Caco-2 (cell line): ENCODE measurements at regions of chr14 and their contacts with region 1.

Region 1: DNA sequence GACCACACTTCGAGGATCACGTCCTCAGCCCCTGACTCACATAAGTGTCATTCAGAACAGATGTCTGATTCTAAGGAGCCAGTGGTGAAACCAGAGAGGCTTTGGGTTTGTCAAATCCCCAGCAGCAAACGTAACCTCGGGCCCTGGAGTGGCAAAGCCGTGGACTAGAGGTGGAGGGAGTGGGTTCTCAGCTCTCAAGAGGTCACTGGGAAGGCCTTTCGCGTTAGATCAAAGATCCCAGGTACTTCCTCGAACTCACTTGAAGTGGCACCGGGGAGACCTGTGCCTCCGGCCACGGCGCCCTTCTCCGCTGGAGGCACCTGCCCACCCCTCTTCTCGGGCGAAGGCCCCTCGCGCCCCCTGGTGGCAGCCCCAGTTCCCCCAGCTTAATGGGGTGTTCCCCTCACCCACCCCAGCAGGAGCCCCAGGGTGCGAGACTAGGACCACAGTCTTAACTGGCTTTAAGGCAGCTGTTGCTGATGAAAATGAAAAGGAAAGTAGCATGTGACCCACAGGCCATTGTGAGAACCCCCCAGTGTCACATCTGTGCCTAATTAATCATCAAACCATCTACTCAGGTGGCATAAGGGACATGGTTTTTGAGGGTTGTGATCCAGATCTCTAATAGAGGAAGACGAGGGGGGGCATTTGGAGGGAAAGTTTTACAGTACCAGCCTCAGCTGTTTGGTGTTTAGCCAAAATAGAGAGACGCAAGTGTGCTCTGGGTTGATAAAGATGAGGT is 672 bp upstream of the ESR2 start:
- DNase-seq: peak; percentile 80 to 91
- H3K4me3 ChIP-seq: peak overlapping the region; percentile 29
- H3K4me3 Mint-ChIP-seq: peak overlapping the region; percentile 74
- H3K27ac Mint-ChIP-seq: no peak overlapping the region
- H3K4me1 ChIP-seq: peaks cover 7% of the 10 kb centered on the region; the same call in 1 of the 2 replicates
- H3K4me1 Mint-ChIP-seq: no peaks in the 10 kb centered on the region
- H3K27me3 ChIP-seq: no peaks in the 10 kb centered on the region
- H3K27me3 Mint-ChIP-seq: peaks cover 3% of the 10 kb centered on the region
- CTCF ChIP-seq: peak; percentile 94

Region 2: DNA sequence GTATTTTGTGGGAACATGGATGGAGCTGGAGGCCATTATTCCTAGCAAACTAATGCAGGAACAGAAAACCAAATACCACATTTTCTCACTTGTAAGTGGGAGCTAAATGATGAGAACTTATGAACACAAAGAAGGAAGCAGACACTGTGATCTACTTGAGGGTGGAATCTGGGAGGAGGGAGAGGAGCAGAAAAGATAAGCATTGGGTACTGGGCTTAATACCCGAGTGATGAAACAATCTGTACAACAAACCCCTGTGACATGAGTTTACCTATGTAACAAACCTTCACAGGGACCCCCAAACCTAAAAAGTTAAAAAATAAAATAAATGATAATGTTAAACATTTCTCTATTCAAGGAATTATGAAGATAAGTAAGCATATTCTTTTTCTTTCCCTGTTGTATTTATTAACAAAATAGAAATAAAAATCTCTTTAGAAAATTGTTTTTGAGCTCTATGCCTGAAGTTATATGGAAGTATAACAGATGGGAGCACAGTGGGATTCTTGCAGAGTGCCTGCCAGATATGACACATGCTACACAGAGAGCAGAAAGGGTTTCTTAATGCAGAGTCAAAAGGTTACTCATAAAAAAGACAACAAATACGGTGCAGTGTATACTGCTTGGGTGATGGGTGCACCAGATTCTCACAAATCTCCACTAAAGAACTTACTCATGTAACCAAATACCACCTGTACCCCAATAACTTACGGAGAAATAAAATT is 494.0 kb before region 1 on chr14:
- CTCF ChIA-PET with region 1: no interaction called
- POLR2A ChIA-PET with region 1: no interaction called
- intact Hi-C with region 1: loop called (anchors 2 kb)
- DNase-seq: no peak
- H3K4me3 ChIP-seq: no peak overlapping the region
- H3K4me3 Mint-ChIP-seq: no peak overlapping the region
- H3K27ac Mint-ChIP-seq: no peak overlapping the region
- H3K4me1 ChIP-seq: no peaks in the 10 kb centered on the region
- H3K4me1 Mint-ChIP-seq: no peaks in the 10 kb centered on the region
- H3K27me3 ChIP-seq: no peaks in the 10 kb centered on the region
- H3K27me3 Mint-ChIP-seq: no peaks in the 10 kb centered on the region
- CTCF ChIP-seq: no peak

Region 3: DNA sequence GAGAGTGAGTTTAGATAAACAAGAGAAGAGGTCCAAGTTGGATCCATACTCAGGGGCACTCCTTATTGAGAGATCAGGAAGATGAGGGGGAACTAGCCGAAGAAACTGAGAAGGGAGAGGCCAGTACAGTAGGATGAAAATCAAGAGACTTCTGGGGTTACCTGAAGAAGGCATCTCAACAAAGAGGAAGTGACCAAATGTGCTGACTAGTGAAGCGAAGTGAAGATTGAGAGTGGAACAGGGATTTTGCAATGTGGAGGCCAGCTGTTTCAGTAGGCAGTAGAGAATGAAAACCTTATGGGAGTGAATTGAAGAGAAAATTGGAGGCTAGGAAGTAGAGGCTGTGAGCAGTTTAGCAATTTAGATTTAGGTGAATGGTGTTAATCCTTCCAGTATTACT is 289.0 kb before region 1 on chr14:
- CTCF ChIA-PET with region 1: interaction called, 13 read pairs
- POLR2A ChIA-PET with region 1: no interaction called
- intact Hi-C with region 1: loop called (anchors 1 kb)
- DNase-seq: no peak
- H3K4me3 ChIP-seq: no peak overlapping the region
- H3K4me3 Mint-ChIP-seq: no peak overlapping the region
- H3K27ac Mint-ChIP-seq: no peak overlapping the region
- H3K4me1 ChIP-seq: no peaks in the 10 kb centered on the region
- H3K4me1 Mint-ChIP-seq: no peaks in the 10 kb centered on the region
- H3K27me3 ChIP-seq: no peaks in the 10 kb centered on the region
- H3K27me3 Mint-ChIP-seq: no peaks in the 10 kb centered on the region
- CTCF ChIP-seq: no peak

Region 4: GRCh38 chr14:64060648-64061096 is 234.2 kb before region 1 on chr14:
- CTCF ChIA-PET with region 1: no interaction called
- POLR2A ChIA-PET with region 1: no interaction called
- intact Hi-C with region 1: loop called (anchors 5 kb)
- DNase-seq: peak in 1 of 2 experiments; percentile 28
- H3K4me3 ChIP-seq: no peak overlapping the region
- H3K4me3 Mint-ChIP-seq: no peak overlapping the region
- H3K27ac Mint-ChIP-seq: peak overlapping the region; percentile 64
- H3K4me1 ChIP-seq: no peaks in the 10 kb centered on the region
- H3K4me1 Mint-ChIP-seq: no peaks in the 10 kb centered on the region
- H3K27me3 ChIP-seq: no peaks in the 10 kb centered on the region
- H3K27me3 Mint-ChIP-seq: no peaks in the 10 kb centered on the region
- CTCF ChIP-seq: peak; percentile 46 to 53

Region 5: GRCh38 chr14:64117671-64118402 is 177.0 kb before region 1 on chr14:
- CTCF ChIA-PET with region 1: no interaction called
- POLR2A ChIA-PET with region 1: no interaction called
- intact Hi-C with region 1: no loop called
- DNase-seq: no peak
- H3K4me3 ChIP-seq: no peak overlapping the region
- H3K4me3 Mint-ChIP-seq: no peak overlapping the region
- H3K27ac Mint-ChIP-seq: no peak overlapping the region
- H3K4me1 ChIP-seq: peaks cover 3% of the 10 kb centered on the region; the same call in 1 of the 2 replicates
- H3K4me1 Mint-ChIP-seq: no peaks in the 10 kb centered on the region
- H3K27me3 ChIP-seq: no peaks in the 10 kb centered on the region
- H3K27me3 Mint-ChIP-seq: no peaks in the 10 kb centered on the region
- CTCF ChIP-seq: no peak

Region 6: GRCh38 chr14:64137657-64138290 is 157.1 kb before region 1 on chr14:
- CTCF ChIA-PET with region 1: interaction called, 27 read pairs
- POLR2A ChIA-PET with region 1: no interaction called
- intact Hi-C with region 1: loop called (anchors 2 kb)
- DNase-seq: peak in 1 of 2 experiments; percentile 24
- H3K4me3 ChIP-seq: no peak overlapping the region
- H3K4me3 Mint-ChIP-seq: no peak overlapping the region
- H3K27ac Mint-ChIP-seq: no peak overlapping the region
- H3K4me1 ChIP-seq: no peaks in the 10 kb centered on the region
- H3K4me1 Mint-ChIP-seq: no peaks in the 10 kb centered on the region
- H3K27me3 ChIP-seq: no peaks in the 10 kb centered on the region
- H3K27me3 Mint-ChIP-seq: no peaks in the 10 kb centered on the region
- CTCF ChIP-seq: peak; percentile 21 to 32

Region 7: GRCh38 chr14:64159588-64159987 is 135.3 kb before region 1 on chr14:
- CTCF ChIA-PET with region 1: no interaction called
- POLR2A ChIA-PET with region 1: no interaction called
- intact Hi-C with region 1: loop called (anchors 2 kb)
- DNase-seq: peak in 1 of 2 experiments; percentile 8
- H3K4me3 ChIP-seq: no peak overlapping the region
- H3K4me3 Mint-ChIP-seq: no peak overlapping the region
- H3K27ac Mint-ChIP-seq: no peak overlapping the region
- H3K4me1 ChIP-seq: no peaks in the 10 kb centered on the region
- H3K4me1 Mint-ChIP-seq: no peaks in the 10 kb centered on the region
- H3K27me3 ChIP-seq: no peaks in the 10 kb centered on the region
- H3K27me3 Mint-ChIP-seq: no peaks in the 10 kb centered on the region
- CTCF ChIP-seq: peak in 1 of 2 experiments; percentile 10

Region 8: DNA sequence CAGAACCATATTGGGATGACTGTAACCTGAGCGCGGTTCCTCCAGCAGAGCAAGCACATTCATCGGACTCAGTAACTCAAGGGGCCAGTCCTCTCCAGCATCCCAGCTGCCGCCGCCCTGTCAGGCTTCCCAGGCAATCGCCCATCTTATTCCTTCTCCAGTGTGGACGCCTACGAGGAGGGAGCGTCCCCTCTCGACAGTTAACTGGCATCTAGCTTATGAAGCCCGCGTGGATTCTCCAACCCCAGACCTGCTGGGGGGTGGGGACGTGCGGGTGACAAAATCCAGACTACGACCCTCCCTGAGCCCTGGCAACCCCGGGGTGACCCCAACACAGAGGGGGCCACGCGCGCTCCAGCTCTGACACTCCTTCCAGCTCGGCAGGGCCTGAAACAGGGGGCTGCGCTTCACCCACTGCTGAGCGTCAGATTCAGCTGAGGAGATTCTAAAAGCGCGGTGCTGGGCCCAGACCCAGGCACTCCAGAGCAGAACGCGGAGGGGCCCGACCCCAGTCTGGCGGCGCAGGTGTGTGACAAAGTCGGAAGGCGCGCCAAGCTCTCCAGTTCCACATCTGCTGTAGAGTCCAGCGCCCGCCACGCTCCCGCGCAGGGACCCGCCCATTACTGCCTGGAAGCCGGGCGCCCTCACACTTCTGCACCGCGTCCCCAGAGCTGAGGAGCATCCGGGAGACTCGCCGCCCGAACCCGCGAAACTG is 43.2 kb after region 1 on chr14:
- CTCF ChIA-PET with region 1: no interaction called
- POLR2A ChIA-PET with region 1: no interaction called
- intact Hi-C with region 1: no loop called
- DNase-seq: peak; percentile 66 to 76
- H3K4me3 ChIP-seq: peak overlapping the region; percentile 81
- H3K4me3 Mint-ChIP-seq: peak overlapping the region; percentile 94
- H3K27ac Mint-ChIP-seq: peak overlapping the region; percentile 96
- H3K4me1 ChIP-seq: peaks cover 8% of the 10 kb centered on the region
- H3K4me1 Mint-ChIP-seq: peaks cover 9% of the 10 kb centered on the region
- H3K27me3 ChIP-seq: no peaks in the 10 kb centered on the region
- H3K27me3 Mint-ChIP-seq: no peaks in the 10 kb centered on the region
- CTCF ChIP-seq: no peak